ENCODE measurements at regions of chr11 and their contacts with region 1.

Region 1: GRCh38 chr11:67288452-67289225 is 464 bp upstream of the ANKRD13D start:
- DNase-seq: peak; percentile 92
- H3K4me3 Mint-ChIP-seq: peak overlapping the region; percentile 73
- H3K27ac Mint-ChIP-seq: peak overlapping the region; percentile 98
- H3K4me1 Mint-ChIP-seq: peaks cover 72% of the 10 kb centered on the region
- H3K27me3 Mint-ChIP-seq: no peaks in the 10 kb centered on the region

Region 2: GRCh38 chr11:67271541-67272284 is 16.9 kb before region 1 on chr11:
- CTCF ChIA-PET with region 1: interaction called, 41 read pairs
- POLR2A ChIA-PET with region 1: interaction called, 10 read pairs
- DNase-seq: peak; percentile 66
- H3K4me3 Mint-ChIP-seq: peak overlapping the region; percentile 95
- H3K27ac Mint-ChIP-seq: peak overlapping the region; percentile 93
- H3K4me1 Mint-ChIP-seq: peaks cover 71% of the 10 kb centered on the region
- H3K27me3 Mint-ChIP-seq: no peaks in the 10 kb centered on the region

Region 3: GRCh38 chr11:67277231-67277961 is 11.2 kb before region 1 on chr11:
- CTCF ChIA-PET with region 1: interaction called, 41 read pairs
- POLR2A ChIA-PET with region 1: interaction called, 10 read pairs
- DNase-seq: peak; percentile 95
- H3K4me3 Mint-ChIP-seq: peak overlapping the region; percentile 78
- H3K27ac Mint-ChIP-seq: peak overlapping the region; percentile 93
- H3K4me1 Mint-ChIP-seq: peaks cover 81% of the 10 kb centered on the region
- H3K27me3 Mint-ChIP-seq: no peaks in the 10 kb centered on the region

Region 4: DNA sequence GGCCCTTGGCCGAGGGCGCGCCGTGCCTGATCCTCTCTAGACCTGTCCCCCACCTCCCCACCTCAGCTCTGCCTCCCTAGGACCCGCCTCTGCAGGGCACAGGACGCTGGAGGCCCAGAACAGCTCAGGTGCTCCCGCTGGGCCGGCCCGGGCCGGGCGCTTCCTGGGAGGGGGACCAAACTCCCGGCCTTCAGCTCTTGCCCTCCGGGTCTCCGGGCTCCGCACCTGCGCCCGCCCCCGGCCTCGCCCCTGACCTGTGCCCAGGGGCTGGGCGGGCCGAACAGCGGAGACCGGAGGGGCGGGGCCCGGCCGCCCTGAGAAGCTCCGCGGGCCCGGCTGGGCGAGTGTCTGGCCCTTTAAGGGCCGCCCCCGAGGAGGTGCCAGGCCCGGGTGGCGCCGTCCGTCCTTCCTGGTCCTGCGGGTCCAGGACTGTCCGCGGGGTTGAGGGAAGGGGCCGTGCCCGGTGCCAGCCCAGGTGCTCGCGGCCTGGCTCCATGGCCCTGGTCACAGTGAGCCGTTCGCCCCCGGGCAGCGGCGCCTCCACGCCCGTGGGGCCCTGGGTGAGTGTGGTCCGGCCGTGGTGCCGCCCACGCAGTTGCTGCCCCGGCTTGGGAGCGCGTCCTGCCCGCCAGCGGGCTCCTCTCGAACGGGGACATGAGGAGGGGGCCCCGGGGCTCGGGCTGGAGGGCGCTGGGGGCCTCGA is 14.6 kb after region 1 on chr11 and contains the start of gene SSH3:
- CTCF ChIA-PET with region 1: interaction called, 11 read pairs
- POLR2A ChIA-PET with region 1: no interaction called
- DNase-seq: no peak
- H3K4me3 Mint-ChIP-seq: peak within 1 kb of the TSS; percentile 43
- H3K27ac Mint-ChIP-seq: no peak within 1 kb of the TSS
- H3K4me1 Mint-ChIP-seq: peaks cover 13% of the 10 kb centered on the region
- H3K27me3 Mint-ChIP-seq: no peaks in the 10 kb centered on the region
- total RNA-seq, gene SSH3: 8.2 to 9.6 TPM